A549 (cell line): ENCODE measurements at regions of chr19 and their contacts with region 1.

Region 1: GRCh38 chr19:42038666-42039065 is 31.3 kb downstream of the GRIK5 start:
- DNase-seq: no peak
- ATAC-seq: no peak
- H3K4me3 ChIP-seq: no peak overlapping the region
- H3K27ac ChIP-seq: no peak overlapping the region
- H3K4me1 ChIP-seq: peaks cover 5% of the 10 kb centered on the region; the same call in 1 of the 3 replicates
- CTCF ChIP-seq: no peak
- EP300 ChIP-seq: no peak
- POLR2A ChIP-seq: no peak
- RAD21 ChIP-seq: no peak

Region 2: GRCh38 chr19:42048992-42049391 is 10.3 kb after region 1 on chr19:
- CTCF ChIA-PET with region 1: interaction called, 324 read pairs
- POLR2A ChIA-PET with region 1: no interaction called
- DNase-seq: no peak
- ATAC-seq: no peak; a peak in 1 of 6 replicates
- H3K4me3 ChIP-seq: peak overlapping the region; percentile 21
- H3K27ac ChIP-seq: 0 out of 6 replicates have a peak overlapping the region, but pooled peaks of 1 of the 2 experiments have one; percentile 18
- H3K4me1 ChIP-seq: peaks cover 14% of the 10 kb centered on the region; the same call in 1 of the 3 replicates
- CTCF ChIP-seq: no peak
- EP300 ChIP-seq: no peak
- POLR2A ChIP-seq: no peak
- RAD21 ChIP-seq: no peak